A673 (cell line): ENCODE measurements at regions of chr3 and their contacts with region 1.

Region 1: DNA sequence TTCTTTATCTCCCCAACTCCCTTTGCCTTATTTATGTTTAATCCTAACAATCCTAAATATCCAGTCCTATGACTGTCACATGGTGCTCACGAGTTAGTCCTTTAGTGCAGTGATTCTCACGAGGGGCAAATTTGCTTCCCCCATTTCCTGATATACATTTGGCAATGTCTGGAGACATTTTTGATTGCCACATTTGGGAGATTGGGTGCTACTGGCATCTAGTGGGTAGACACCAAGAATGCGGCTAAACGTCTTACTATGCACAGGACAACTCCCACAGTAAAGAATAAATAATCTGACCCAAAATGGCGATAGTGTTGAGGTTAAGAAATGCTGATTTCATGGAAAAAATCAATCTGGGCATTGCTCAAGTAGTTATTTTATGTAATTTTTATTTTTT is 466.5 kb downstream of the ROBO2 start:
- DNase-seq: peak; percentile 51
- H3K4me3 ChIP-seq: no peak overlapping the region
- H3K27ac ChIP-seq: no peak overlapping the region
- H3K4me1 ChIP-seq: no peaks in the 10 kb centered on the region
- H3K27me3 ChIP-seq: no peaks in the 10 kb centered on the region
- CTCF ChIP-seq: peak; percentile 38

Region 2: GRCh38 chr3:77348231-77348855 is 158.0 kb before region 1 on chr3:
- CTCF ChIA-PET with region 1: no interaction called
- POLR2A ChIA-PET with region 1: no interaction called
- intact Hi-C with region 1: loop called (anchors 10 kb)
- DNase-seq: peak; percentile 50
- H3K4me3 ChIP-seq: no peak overlapping the region
- H3K27ac ChIP-seq: no peak overlapping the region
- H3K4me1 ChIP-seq: no peaks in the 10 kb centered on the region
- H3K27me3 ChIP-seq: no peaks in the 10 kb centered on the region
- CTCF ChIP-seq: peak; percentile 50

Region 3: GRCh38 chr3:77563012-77563411 is 56.6 kb after region 1 on chr3:
- CTCF ChIA-PET with region 1: no interaction called
- POLR2A ChIA-PET with region 1: no interaction called
- intact Hi-C with region 1: no loop called
- DNase-seq: no peak
- H3K4me3 ChIP-seq: no peak overlapping the region
- H3K27ac ChIP-seq: no peak overlapping the region
- H3K4me1 ChIP-seq: no peaks in the 10 kb centered on the region
- H3K27me3 ChIP-seq: no peaks in the 10 kb centered on the region
- CTCF ChIP-seq: no peak

Region 4: GRCh38 chr3:78116874-78117273 is 610.5 kb after region 1 on chr3:
- CTCF ChIA-PET with region 1: no interaction called
- POLR2A ChIA-PET with region 1: no interaction called
- intact Hi-C with region 1: no loop called
- DNase-seq: no peak
- H3K4me3 ChIP-seq: no peak overlapping the region
- H3K27ac ChIP-seq: no peak overlapping the region
- H3K4me1 ChIP-seq: no peaks in the 10 kb centered on the region
- H3K27me3 ChIP-seq: no peaks in the 10 kb centered on the region
- CTCF ChIP-seq: no peak